Naive thymus-derived CD4-positive, alpha-beta T cell (primary cell): ENCODE measurements at regions of chr12 and their contacts with region 1.

Region 1: DNA sequence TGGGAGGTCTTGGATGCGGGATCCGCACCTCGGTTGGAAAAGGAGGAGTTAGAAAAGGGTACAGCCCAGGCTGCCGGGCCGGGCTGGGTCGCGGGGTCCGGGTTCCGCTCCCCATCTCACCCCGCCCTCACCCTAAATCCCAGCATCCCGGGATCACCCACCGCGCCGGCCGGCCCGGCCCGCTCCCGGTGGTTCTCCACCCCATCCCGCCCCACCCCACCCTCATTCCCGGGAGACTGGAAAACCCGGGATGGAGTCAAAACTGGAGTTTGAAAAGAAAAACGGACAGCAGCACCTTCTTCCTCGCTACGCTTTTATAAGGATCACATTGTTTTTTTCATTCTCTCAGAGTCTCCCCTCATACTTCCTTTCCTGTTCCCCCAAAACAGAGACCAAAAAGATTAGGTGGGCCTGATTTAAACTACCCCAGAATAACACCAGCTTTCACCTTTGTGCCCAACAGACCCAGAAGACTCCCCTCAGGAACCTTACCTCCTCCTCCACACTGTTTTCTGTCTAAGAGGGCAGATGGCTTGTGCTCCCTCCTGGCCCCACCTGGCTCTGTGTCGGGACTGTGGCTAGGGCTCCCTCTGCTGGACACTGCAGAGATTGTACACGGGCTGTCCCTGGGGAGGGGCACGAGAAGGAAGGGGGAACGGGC is 2.8 kb downstream of the GLI1 start:
- DNase-seq: peak; percentile 75 to 92 (median 86)
- ATAC-seq: peak; percentile 84
- H3K4me3 ChIP-seq: peak overlapping the region; percentile 56
- H3K4me3 Mint-ChIP-seq: peak overlapping the region; percentile 78 to 93 (median 88)
- H3K27ac ChIP-seq: no peak overlapping the region
- H3K27ac Mint-ChIP-seq: peak overlapping the region; percentile 56 to 91 (median 70)
- H3K4me1 ChIP-seq: peaks cover 21 to 30% of the 10 kb centered on the region in 2 donors
- H3K4me1 Mint-ChIP-seq: peaks cover 35 to 55% (median 42%) of the 10 kb centered on the region in 7 donors
- H3K27me3 ChIP-seq: no peaks in the 10 kb centered on the region
- H3K27me3 Mint-ChIP-seq: peaks cover 0 to 22% (median 8%) of the 10 kb centered on the region in 5 donors

Region 2: DNA sequence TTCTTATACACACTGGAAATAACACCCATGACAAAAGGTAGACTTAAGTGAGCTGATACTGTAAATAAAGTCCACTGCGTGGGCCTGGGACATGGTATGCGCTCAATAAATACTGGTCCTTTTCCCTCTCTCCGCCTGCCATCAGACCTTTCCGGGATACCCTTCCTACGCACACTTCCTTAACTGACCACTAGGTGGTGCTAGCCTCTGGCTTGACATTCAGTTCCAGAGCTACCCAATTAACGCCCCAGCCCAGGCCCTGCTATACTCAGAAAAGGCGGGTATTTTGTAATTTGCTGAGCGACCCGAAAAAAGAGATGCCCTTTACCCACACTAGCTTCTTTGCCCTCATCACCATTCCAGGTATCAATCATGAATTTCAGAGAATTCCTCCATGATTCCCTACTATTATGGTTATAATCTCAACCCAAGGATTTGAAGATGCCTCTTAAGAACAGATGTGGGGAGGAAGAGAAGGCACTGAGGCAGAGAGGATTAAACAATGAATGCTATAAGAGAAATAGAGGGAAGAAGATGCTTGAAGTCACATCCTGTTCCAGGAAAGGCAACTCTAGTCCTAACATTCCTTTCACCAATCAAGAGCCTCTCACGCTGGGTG is 338.0 kb before region 1 on chr12:
- CTCF ChIA-PET with region 1: interaction called, 3 read pairs
- POLR2A ChIA-PET with region 1: no interaction called
- intact Hi-C with region 1: loop called in 1 of 2 experiments (anchors 10 kb)
- DNase-seq: peak; percentile 50 to 82 (median 72)
- ATAC-seq: peak; percentile 87
- H3K4me3 ChIP-seq: no peak overlapping the region
- H3K4me3 Mint-ChIP-seq: peak overlapping the region in 2 of 10 donors; percentile 20 to 24
- H3K27ac ChIP-seq: no peak overlapping the region
- H3K27ac Mint-ChIP-seq: peak overlapping the region in 2 of 9 donors; percentile 15 to 37
- H3K4me1 ChIP-seq: peaks cover 0 to 6% of the 10 kb centered on the region in 2 donors
- H3K4me1 Mint-ChIP-seq: peaks cover 2 to 16% (median 6%) of the 10 kb centered on the region in 7 donors
- H3K27me3 ChIP-seq: no peaks in the 10 kb centered on the region
- H3K27me3 Mint-ChIP-seq: peaks cover 0 to 34% (median 0%) of the 10 kb centered on the region in 5 donors

Region 3: GRCh38 chr12:57309420-57309819 is 153.0 kb before region 1 on chr12:
- CTCF ChIA-PET with region 1: interaction called, 4 read pairs
- POLR2A ChIA-PET with region 1: no interaction called
- intact Hi-C with region 1: loop called (anchors 2 kb)
- DNase-seq: no peak
- ATAC-seq: no peak
- H3K4me3 ChIP-seq: no peak overlapping the region
- H3K4me3 Mint-ChIP-seq: no peak overlapping the region
- H3K27ac ChIP-seq: no peak overlapping the region
- H3K27ac Mint-ChIP-seq: peak overlapping the region in 1 of 9 donors; percentile 28
- H3K4me1 ChIP-seq: no peaks in the 10 kb centered on the region
- H3K4me1 Mint-ChIP-seq: peaks cover 0 to 5% (median 0%) of the 10 kb centered on the region in 7 donors
- H3K27me3 ChIP-seq: no peaks in the 10 kb centered on the region
- H3K27me3 Mint-ChIP-seq: no peaks in the 10 kb centered on the region

Region 4: DNA sequence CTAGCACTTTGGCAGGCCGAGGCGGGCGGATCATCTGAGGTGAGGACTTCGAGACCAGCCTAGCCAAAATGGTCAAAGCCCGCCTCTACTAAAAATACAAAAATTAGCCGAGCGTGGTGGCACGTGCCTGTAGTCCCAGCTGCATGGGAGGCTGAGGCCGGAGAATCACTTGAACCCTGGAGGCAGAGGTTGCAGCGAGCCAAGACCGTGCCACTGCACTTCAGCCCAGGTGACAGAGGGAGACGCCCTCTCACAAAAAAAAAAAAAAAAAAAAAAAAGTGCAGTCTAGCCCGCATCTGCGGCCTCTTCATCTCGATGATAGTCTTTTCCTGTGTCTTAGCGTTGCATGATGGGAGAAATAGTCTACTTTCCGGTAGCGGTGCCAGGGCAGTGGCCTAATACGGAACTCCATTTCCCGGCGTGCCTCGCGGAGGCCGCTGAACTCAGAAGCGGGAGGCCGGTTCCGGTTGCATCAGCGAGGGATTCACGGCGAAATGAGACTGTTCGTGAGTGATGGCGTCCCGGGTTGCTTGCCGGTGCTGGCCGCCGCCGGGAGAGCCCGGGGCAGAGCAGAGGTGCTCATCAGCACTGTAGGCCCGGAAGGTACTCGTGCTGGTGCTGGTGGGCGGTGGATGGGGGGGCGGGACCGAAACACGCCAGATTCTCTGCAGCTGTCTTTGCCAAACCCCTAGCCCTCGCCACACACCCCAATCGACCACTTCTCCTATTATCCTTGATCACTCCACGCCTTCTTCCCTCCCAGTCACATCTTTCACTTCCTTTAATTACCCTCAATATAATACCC is 25.4 kb after region 1 on chr12 and contains the start of gene MARS1:
- CTCF ChIA-PET with region 1: interaction called, 3 read pairs
- POLR2A ChIA-PET with region 1: interaction called, 8 read pairs
- intact Hi-C with region 1: loop called (anchors 1 to 2 kb)
- DNase-seq: peak; percentile 71 to 95 (median 93)
- ATAC-seq: peak; percentile 99
- H3K4me3 ChIP-seq: peak within 1 kb of the TSS; percentile 89
- H3K4me3 Mint-ChIP-seq: peak within 1 kb of the TSS; percentile 89 to 100 (median 98)
- H3K27ac ChIP-seq: peak within 1 kb of the TSS; percentile 86
- H3K27ac Mint-ChIP-seq: peak within 1 kb of the TSS; percentile 86 to 99 (median 96)
- H3K4me1 ChIP-seq: peaks cover 17 to 21% of the 10 kb centered on the region in 2 donors
- H3K4me1 Mint-ChIP-seq: peaks cover 21 to 48% (median 40%) of the 10 kb centered on the region in 7 donors
- H3K27me3 ChIP-seq: no peaks in the 10 kb centered on the region
- H3K27me3 Mint-ChIP-seq: peaks cover 0 to 2% (median 0%) of the 10 kb centered on the region in 5 donors
- total RNA-seq, gene MARS1: 178 to 229 (median 197) TPM

Region 5: GRCh38 chr12:57583008-57583831 is 120.8 kb after region 1 on chr12:
- CTCF ChIA-PET with region 1: interaction called, 16 read pairs
- POLR2A ChIA-PET with region 1: no interaction called
- intact Hi-C with region 1: loop called in 1 of 2 experiments (anchors 1 kb)
- DNase-seq: peak; percentile 24 to 79 (median 71)
- ATAC-seq: peak; percentile 100
- H3K4me3 ChIP-seq: no peak overlapping the region
- H3K4me3 Mint-ChIP-seq: no peak overlapping the region
- H3K27ac ChIP-seq: no peak overlapping the region
- H3K27ac Mint-ChIP-seq: peak overlapping the region in 1 of 9 donors; percentile 78
- H3K4me1 ChIP-seq: no peaks in the 10 kb centered on the region
- H3K4me1 Mint-ChIP-seq: peaks cover 5 to 15% (median 6%) of the 10 kb centered on the region in 7 donors
- H3K27me3 ChIP-seq: no peaks in the 10 kb centered on the region
- H3K27me3 Mint-ChIP-seq: peaks cover 0 to 18% (median 14%) of the 10 kb centered on the region in 5 donors

Region 6: DNA sequence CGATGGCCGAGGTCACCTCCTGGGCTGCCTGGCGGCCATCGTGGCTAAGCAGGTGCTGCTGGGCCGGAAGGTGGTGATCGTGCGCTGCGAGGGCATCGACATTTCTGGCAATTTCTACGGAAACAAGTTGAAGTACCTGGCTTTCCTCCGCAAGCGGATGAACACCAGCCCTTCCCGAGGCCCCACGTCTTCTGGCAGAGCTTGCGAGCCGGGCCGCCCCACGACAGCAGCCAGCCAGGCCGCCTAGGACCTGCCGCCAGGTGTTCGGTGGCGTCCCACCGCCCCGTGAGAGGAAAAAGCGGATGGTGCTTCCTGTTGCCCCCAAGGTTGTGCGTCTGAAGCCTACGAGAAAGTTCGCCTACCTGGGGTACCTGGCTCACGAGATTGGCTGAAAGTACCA is 212.3 kb after region 1 on chr12:
- CTCF ChIA-PET with region 1: no interaction called
- POLR2A ChIA-PET with region 1: no interaction called
- intact Hi-C with region 1: no loop called
- DNase-seq: no peak
- ATAC-seq: no peak
- H3K4me3 ChIP-seq: no peak overlapping the region
- H3K4me3 Mint-ChIP-seq: no peak overlapping the region
- H3K27ac ChIP-seq: no peak overlapping the region
- H3K27ac Mint-ChIP-seq: no peak overlapping the region
- H3K4me1 ChIP-seq: no peaks in the 10 kb centered on the region
- H3K4me1 Mint-ChIP-seq: peaks cover 0 to 1% (median 0%) of the 10 kb centered on the region in 7 donors
- H3K27me3 ChIP-seq: no peaks in the 10 kb centered on the region
- H3K27me3 Mint-ChIP-seq: peaks cover 0 to 14% (median 4%) of the 10 kb centered on the region in 5 donors

Region 7: GRCh38 chr12:57693659-57694458 is 231.5 kb after region 1 on chr12 and contains the start of gene OS9:
- CTCF ChIA-PET with region 1: no interaction called
- POLR2A ChIA-PET with region 1: no interaction called
- intact Hi-C with region 1: loop called (anchors 1 to 10 kb)
- DNase-seq: peak; percentile 76 to 99 (median 98)
- ATAC-seq: peak; percentile 96
- H3K4me3 ChIP-seq: peak within 1 kb of the TSS; percentile 92
- H3K4me3 Mint-ChIP-seq: no peak within 1 kb of the TSS
- H3K27ac ChIP-seq: peak within 1 kb of the TSS; percentile 83
- H3K27ac Mint-ChIP-seq: no peak within 1 kb of the TSS
- H3K4me1 ChIP-seq: peaks cover 10 to 23% of the 10 kb centered on the region in 2 donors
- H3K4me1 Mint-ChIP-seq: peaks cover 2 to 14% (median 7%) of the 10 kb centered on the region in 7 donors
- H3K27me3 ChIP-seq: no peaks in the 10 kb centered on the region
- H3K27me3 Mint-ChIP-seq: peaks cover 0 to 18% (median 7%) of the 10 kb centered on the region in 5 donors
- total RNA-seq, gene OS9: 139 to 175 (median 171) TPM

Region 8: DNA sequence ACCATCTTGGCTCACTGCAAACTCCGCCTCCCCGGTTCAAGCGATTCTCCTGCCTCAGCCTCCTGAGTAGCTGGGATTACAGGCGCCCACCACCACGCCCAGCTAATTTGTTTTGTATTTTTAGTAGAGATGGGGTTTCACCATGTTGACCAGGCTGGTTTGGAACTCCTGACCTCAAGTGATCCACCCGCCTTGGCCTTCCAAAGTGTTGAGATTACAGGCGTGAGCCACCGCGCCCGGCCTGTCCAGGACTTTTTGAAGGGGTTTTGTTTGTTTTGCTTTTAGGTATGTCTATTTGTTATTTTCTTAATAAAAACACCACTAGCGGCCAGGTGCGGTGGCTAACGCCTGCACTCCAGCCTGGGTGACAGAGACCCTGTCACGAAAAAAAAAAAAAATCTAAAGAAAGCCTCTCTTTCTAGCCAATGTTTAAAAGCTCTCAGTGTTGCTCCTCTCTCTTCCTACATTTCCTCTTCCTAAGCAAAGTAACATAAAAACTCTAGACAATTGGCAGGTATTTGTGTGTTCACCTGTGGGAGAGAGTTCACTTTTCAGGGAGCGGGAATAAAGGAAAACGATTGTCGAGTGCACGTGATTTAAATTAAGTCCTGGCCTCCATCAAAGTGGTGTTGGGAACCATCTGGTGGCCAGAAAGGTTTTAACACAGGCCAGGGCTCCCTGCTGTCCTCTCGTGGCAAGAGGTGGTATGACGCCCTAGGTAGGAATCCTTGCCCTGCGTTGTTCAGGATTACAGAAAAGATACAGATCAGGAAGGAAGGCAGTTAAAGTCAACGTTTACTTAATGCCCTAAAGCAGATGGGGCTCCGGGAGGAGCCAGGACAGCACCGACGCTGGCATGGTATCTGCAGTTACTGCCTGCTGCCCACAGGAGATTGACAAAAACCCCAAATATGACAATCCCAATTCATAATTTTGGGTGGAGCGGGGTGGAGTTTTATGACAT is 442.7 kb after region 1 on chr12:
- CTCF ChIA-PET with region 1: no interaction called
- POLR2A ChIA-PET with region 1: no interaction called
- intact Hi-C with region 1: loop called in 1 of 2 experiments (anchors 1 kb)
- DNase-seq: peak; percentile 64 to 86 (median 76)
- ATAC-seq: peak; percentile 100
- H3K4me3 ChIP-seq: no peak overlapping the region
- H3K4me3 Mint-ChIP-seq: peak overlapping the region; percentile 31 to 73 (median 64)
- H3K27ac ChIP-seq: no peak overlapping the region
- H3K27ac Mint-ChIP-seq: peak overlapping the region in 5 of 9 donors; percentile 2 to 68 (median 51)
- H3K4me1 ChIP-seq: peaks cover 0 to under 1% of the 10 kb centered on the region in 2 donors
- H3K4me1 Mint-ChIP-seq: peaks cover 5 to 11% (median 6%) of the 10 kb centered on the region in 7 donors
- H3K27me3 ChIP-seq: no peaks in the 10 kb centered on the region
- H3K27me3 Mint-ChIP-seq: peaks cover 4 to 36% (median 17%) of the 10 kb centered on the region in 5 donors

Region 9: GRCh38 chr12:58896278-58896677 is 1433.9 kb after region 1 on chr12:
- CTCF ChIA-PET with region 1: no interaction called
- POLR2A ChIA-PET with region 1: no interaction called
- intact Hi-C with region 1: no loop called
- DNase-seq: no peak
- ATAC-seq: no peak
- H3K4me3 ChIP-seq: no peak overlapping the region
- H3K4me3 Mint-ChIP-seq: no peak overlapping the region
- H3K27ac ChIP-seq: no peak overlapping the region
- H3K27ac Mint-ChIP-seq: no peak overlapping the region
- H3K4me1 ChIP-seq: no peaks in the 10 kb centered on the region
- H3K4me1 Mint-ChIP-seq: no peaks in the 10 kb centered on the region
- H3K27me3 ChIP-seq: no peaks in the 10 kb centered on the region
- H3K27me3 Mint-ChIP-seq: peaks cover 0 to 5% (median 0%) of the 10 kb centered on the region in 5 donors